ENCODE measurements at regions of chr6 and their contacts with region 1.

Region 1: GRCh38 chr6:17987576-17988421 is at the start of gene KIF13A:
- DNase-seq: peak; percentile 49 to 89 (median 74)

Region 2: GRCh38 chr6:17706580-17707370 is 281.0 kb before region 1 on chr6 and contains the start of gene NUP153:
- intact Hi-C with region 1: loop called (anchors 10 kb)
- DNase-seq: peak; percentile 97 to 100 (median 99)

Region 3: DNA sequence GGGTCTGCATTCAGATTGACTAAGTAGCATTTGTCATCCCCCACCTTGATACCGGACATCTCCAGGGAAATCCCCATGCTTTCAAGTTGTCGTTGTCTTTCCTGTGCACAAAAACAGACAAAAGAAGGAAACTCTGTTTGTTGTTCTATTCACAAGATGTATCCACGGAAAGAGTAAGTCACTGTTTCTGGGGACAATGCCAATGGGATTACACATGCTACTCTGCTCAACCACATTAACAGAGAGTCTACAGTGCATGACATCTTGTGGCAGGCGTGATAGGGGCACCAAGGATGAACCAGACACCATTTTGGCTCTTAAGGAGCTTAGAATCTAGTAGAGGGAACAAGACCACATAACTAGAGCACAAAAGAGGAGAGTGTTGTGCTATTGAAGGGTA is 156.7 kb before region 1 on chr6:
- intact Hi-C with region 1: loop called (anchors 10 kb)
- DNase-seq: peak in 12 of 42 donors; percentile 9 to 54 (median 28)

Region 4: GRCh38 chr6:17865798-17866725 is 121.7 kb before region 1 on chr6:
- intact Hi-C with region 1: loop called (anchors 5 kb)
- DNase-seq: peak; percentile 24 to 93 (median 68)

Region 5: DNA sequence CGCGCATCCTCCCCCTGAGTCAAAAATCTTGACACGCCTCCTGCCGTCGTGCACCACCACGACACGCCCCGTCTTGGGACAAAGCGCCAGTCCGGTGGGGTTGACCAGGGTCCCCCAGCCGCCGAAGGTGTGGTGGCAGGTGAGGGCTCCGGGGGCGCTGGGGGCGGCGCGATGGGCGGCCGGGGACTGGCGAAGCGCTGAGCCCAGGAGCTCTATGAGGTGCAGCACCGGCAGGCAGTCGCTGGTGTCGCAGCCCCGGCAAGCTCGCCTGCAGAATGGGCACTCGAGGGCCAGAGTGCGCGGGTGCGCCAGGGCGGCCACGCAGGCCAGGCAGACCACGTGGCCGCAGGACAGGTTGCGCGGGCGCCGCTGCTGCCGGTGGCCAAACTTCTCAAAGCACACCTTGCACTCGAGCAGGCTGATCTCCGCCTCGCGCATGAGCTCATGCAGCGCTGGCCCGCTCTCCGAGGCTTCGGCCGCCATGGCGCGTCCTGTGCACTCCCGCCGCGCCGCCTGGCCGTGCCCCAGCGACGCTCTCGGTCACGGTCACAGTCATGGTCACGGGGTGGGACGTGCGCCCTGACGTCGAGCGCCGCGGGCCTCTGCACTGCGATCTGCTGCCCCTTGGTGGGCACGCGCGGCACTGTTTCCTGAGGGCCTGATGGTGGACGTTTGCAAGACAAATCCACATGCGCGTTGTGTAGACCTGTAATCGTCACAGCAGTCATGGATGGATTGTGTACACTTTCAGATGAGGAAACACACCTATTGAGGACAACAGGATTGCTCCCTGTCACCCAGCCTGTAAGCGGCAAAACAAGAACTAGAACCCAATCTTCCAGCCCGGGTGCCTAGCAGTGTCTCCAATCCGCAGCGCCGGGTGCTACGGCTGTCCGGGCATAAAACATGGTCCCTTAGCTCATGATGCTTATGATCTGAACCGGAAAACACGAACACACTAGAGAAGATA is 134.6 kb after region 1 on chr6 and contains the start of gene NHLRC1:
- intact Hi-C with region 1: loop called (anchors 5 kb)
- DNase-seq: peak; percentile 85 to 96 (median 92)

Region 6: GRCh38 chr6:18264219-18264922 is 276.6 kb after region 1 on chr6 and contains the start of gene DEK:
- intact Hi-C with region 1: loop called (anchors 5 kb)
- DNase-seq: peak; percentile 71 to 95 (median 89)

Measured in head of caudate nucleus (tissue), 42 donors.